CD14-positive monocyte (primary cell): ENCODE measurements at regions of chr10 and their contacts with region 1.

Region 1: DNA sequence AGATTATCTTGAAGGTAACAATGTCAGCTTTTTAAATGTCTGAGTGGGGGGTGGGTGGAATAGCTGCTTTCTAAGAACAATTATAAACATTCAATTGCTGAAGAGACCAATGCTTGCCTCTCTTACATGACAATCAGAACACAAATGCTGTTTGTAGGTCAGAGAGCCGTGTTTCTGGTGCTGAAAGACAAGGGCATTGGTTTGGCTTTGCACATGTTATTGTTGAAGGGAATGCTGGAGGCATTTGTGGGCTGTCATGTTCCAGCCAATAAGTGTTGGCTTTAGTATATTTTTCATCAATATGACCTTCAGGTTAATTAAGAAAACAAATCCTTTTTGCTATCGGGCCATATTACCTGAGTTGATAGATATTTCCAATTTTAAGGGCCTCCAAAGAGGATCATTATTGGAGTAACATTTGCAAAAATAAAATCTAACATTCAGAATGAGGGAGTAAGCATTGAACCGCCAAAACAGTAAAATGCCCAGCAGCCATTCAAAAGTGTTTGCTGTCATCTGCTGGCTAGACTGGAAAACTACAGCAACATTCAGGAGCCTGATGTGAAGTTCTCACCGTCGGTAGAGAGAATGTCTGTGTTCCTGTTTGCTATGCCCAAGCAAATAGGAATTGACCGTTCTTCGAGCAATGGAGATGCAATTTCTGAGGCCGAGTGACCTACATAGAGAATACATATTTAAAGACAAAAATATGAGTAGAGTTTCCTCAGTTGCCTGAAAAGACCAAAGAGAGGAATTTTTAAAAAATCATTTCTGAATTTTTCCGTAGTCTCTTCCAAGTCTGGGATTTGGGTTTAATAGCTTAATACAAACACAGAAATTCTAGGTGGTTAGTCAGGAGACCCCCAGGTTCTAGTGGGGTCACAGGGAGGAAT is 118.9 kb downstream of the APBB1IP start:
- DNase-seq: peak; percentile 23 to 46 (median 42)
- H3K4me3 ChIP-seq: no peak overlapping the region
- H3K4me3 Mint-ChIP-seq: no peak overlapping the region
- H3K27ac ChIP-seq: peak overlapping the region in 1 of 2 donors; percentile 73
- H3K27ac Mint-ChIP-seq: peak overlapping the region; percentile 17 to 97 (median 64)
- H3K4me1 ChIP-seq: peaks cover 25 to 37% of the 10 kb centered on the region in 2 donors
- H3K4me1 Mint-ChIP-seq: peaks cover 43% of the 10 kb centered on the region
- H3K27me3 ChIP-seq: no peaks in the 10 kb centered on the region
- H3K27me3 Mint-ChIP-seq: peaks cover 0 to 2% (median 0%) of the 10 kb centered on the region in 3 donors
- CTCF ChIP-seq: peak; percentile 93

Region 2: DNA sequence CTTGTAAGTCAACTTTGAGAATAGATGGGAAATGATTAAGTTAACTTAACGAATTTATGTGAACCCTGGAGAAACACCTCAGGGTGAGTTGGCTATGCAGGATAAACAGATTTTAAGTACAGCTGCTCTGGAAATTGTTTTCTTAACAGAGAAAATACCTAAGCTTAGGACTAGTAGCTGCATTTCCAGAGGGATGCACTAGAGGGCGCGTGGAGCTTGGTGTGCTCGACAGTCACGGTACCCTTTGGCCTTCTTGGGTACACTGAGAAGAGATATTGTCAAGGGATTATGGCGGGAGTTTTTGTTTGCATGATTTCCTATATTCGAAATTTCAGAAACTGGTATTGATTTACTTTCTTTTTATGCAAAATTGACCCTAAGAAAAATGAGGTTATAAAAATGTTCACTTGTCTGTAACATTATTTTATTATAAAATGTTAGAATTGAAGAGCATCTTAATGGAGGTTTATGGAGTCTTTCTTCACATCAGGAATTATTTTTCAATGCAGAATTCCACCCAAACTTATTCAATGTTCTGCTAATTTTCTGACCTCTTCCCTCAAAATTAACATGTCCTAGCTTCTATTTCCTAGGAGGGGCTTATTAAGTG is 681.3 kb before region 1 on chr10:
- intact Hi-C with region 1: loop called in 1 of 2 experiments (anchors 5 kb)
- DNase-seq: peak; percentile 15 to 62 (median 49)
- H3K4me3 ChIP-seq: no peak overlapping the region
- H3K4me3 Mint-ChIP-seq: no peak overlapping the region
- H3K27ac ChIP-seq: no peak overlapping the region
- H3K27ac Mint-ChIP-seq: no peak overlapping the region
- H3K4me1 ChIP-seq: no peaks in the 10 kb centered on the region
- H3K4me1 Mint-ChIP-seq: no peaks in the 10 kb centered on the region
- H3K27me3 ChIP-seq: no peaks in the 10 kb centered on the region
- H3K27me3 Mint-ChIP-seq: peaks cover 2 to 12% (median 10%) of the 10 kb centered on the region in 3 donors
- CTCF ChIP-seq: peak; percentile 96

Region 3: GRCh38 chr10:26334932-26335573 is 221.9 kb before region 1 on chr10:
- intact Hi-C with region 1: loop called (anchors 1 to 2 kb)
- DNase-seq: peak; percentile 63 to 75 (median 73)
- H3K4me3 ChIP-seq: peak overlapping the region; percentile 51 to 89 (median 70)
- H3K4me3 Mint-ChIP-seq: peak overlapping the region; percentile 84 to 90
- H3K27ac ChIP-seq: peak overlapping the region in 1 of 2 donors; percentile 68
- H3K27ac Mint-ChIP-seq: peak overlapping the region in 6 of 7 donors; percentile 7 to 90 (median 80)
- H3K4me1 ChIP-seq: peaks cover 19 to 22% of the 10 kb centered on the region in 2 donors
- H3K4me1 Mint-ChIP-seq: peaks cover 15% of the 10 kb centered on the region
- H3K27me3 ChIP-seq: no peaks in the 10 kb centered on the region
- H3K27me3 Mint-ChIP-seq: peaks cover 0 to 2% (median 1%) of the 10 kb centered on the region in 3 donors
- CTCF ChIP-seq: peak; percentile 95

Region 4: DNA sequence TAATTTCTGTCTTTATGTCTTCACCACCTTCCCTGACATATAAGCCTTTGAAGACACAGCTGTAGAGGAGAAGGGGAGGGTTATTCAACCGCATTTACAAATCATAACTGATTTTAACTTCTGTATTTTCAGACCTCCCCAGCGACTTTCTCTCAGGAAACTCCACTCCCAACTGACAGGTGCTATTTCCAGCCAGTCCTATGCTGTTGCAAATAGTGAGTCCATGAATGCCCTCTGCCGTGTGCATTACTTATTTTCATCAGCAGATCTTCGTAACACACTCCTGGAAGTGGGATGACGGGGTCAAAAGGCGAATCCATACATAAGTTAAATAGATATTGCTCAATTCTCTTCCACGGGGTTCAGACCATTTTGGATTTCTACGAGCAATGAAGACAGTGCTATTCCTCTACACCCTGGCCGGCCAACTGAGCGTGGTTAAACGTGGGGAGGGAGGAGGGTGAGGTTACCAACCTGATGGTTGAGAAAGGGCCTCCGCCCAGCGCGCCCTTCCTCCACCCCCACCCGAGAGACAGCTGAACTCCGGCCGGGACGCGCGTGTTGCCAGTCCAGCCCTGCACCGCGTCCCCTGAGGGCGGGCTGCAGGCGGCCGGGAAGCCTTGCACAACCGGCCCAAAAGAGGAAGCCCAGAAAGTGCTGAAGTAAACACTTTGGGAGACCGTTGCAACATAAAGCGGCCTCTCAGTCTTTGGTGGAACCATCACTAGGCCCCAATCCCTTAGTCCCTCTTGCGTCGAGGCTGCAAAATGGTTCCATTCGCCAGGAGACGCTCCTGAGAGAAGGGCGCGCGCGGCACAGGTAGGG is 119.1 kb before region 1 on chr10 and contains the start of gene APBB1IP:
- intact Hi-C with region 1: loop called in 1 of 2 experiments (anchors 10 kb)
- DNase-seq: peak; percentile 96 to 98 (median 97)
- H3K4me3 ChIP-seq: peak within 1 kb of the TSS; percentile 61 to 94 (median 77)
- H3K4me3 Mint-ChIP-seq: peak within 1 kb of the TSS; percentile 91 to 97
- H3K27ac ChIP-seq: peak within 1 kb of the TSS; percentile 96 to 97
- H3K27ac Mint-ChIP-seq: peak within 1 kb of the TSS; percentile 96 to 99 (median 99)
- H3K4me1 ChIP-seq: peaks cover 58 to 84% of the 10 kb centered on the region in 2 donors
- H3K4me1 Mint-ChIP-seq: peaks cover 54% of the 10 kb centered on the region
- H3K27me3 ChIP-seq: no peaks in the 10 kb centered on the region
- H3K27me3 Mint-ChIP-seq: no peaks in the 10 kb centered on the region
- CTCF ChIP-seq: peak; percentile 22
- polyA plus RNA-seq, gene APBB1IP: 24.6 to 78.7 (median 45.4) TPM

Region 5: DNA sequence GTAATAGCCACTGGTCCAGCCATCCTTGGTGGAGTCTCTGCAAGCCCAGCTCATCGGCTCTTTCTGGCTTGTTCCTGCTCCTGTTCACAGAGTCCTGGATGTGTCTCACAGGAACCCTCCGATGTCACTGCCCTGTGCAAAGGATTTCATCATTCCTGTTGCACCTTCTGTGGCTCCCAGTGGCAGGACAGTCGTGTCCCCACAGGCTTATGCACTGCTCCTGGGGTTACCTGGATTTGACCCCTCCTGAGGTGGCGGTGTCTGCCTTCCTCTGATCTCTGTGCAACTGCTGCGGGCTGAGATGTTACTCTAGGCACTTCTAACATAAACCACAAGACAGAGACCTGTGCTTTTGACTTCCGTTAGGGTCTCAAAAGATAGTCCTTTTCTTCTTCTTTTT is 88.3 kb before region 1 on chr10:
- intact Hi-C with region 1: no loop called
- DNase-seq: no peak
- H3K4me3 ChIP-seq: no peak overlapping the region
- H3K4me3 Mint-ChIP-seq: no peak overlapping the region
- H3K27ac ChIP-seq: peak overlapping the region in 1 of 2 donors; percentile 52
- H3K27ac Mint-ChIP-seq: peak overlapping the region in 4 of 7 donors; percentile 24 to 67 (median 33)
- H3K4me1 ChIP-seq: peaks cover 17 to 26% of the 10 kb centered on the region in 2 donors
- H3K4me1 Mint-ChIP-seq: peaks cover 58% of the 10 kb centered on the region
- H3K27me3 ChIP-seq: no peaks in the 10 kb centered on the region
- H3K27me3 Mint-ChIP-seq: no peaks in the 10 kb centered on the region
- CTCF ChIP-seq: no peak

Region 6: GRCh38 chr10:26503911-26504310 is 53.1 kb before region 1 on chr10:
- intact Hi-C with region 1: loop called in 1 of 2 experiments (anchors 10 kb)
- DNase-seq: no peak
- H3K4me3 ChIP-seq: no peak overlapping the region
- H3K4me3 Mint-ChIP-seq: no peak overlapping the region
- H3K27ac ChIP-seq: peak overlapping the region in 1 of 2 donors; percentile 66
- H3K27ac Mint-ChIP-seq: peak overlapping the region in 5 of 7 donors; percentile 11 to 91 (median 51)
- H3K4me1 ChIP-seq: peaks cover 7 to 20% of the 10 kb centered on the region in 2 donors
- H3K4me1 Mint-ChIP-seq: peaks cover 32% of the 10 kb centered on the region
- H3K27me3 ChIP-seq: no peaks in the 10 kb centered on the region
- H3K27me3 Mint-ChIP-seq: no peaks in the 10 kb centered on the region
- CTCF ChIP-seq: peak; percentile 27

Region 7: DNA sequence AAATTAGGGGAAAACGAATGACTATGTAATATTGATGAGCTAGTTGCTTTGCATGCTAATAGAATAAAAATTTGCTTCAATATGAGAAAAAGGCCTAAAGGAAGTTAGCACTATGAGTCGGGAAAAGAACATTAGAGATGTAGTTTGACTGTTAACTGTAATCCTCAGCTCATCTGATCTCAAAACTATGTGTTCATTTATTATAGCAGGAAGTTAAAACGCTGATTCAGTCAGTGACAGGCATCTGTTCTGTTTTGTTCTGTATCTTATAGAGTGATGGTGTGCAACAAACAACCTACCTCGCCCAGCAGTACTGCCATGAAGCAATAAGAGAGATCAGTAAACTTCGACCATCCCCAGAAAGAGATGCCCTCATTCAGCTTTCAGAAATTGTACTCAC is 189.1 kb after region 1 on chr10:
- intact Hi-C with region 1: no loop called
- DNase-seq: no peak
- H3K4me3 ChIP-seq: no peak overlapping the region
- H3K4me3 Mint-ChIP-seq: no peak overlapping the region
- H3K27ac ChIP-seq: peak overlapping the region in 1 of 2 donors; percentile 54
- H3K27ac Mint-ChIP-seq: peak overlapping the region in 4 of 7 donors; percentile 14 to 50 (median 33)
- H3K4me1 ChIP-seq: no peaks in the 10 kb centered on the region
- H3K4me1 Mint-ChIP-seq: peaks cover 3% of the 10 kb centered on the region
- H3K27me3 ChIP-seq: no peaks in the 10 kb centered on the region
- H3K27me3 Mint-ChIP-seq: no peaks in the 10 kb centered on the region
- CTCF ChIP-seq: no peak

Region 8: DNA sequence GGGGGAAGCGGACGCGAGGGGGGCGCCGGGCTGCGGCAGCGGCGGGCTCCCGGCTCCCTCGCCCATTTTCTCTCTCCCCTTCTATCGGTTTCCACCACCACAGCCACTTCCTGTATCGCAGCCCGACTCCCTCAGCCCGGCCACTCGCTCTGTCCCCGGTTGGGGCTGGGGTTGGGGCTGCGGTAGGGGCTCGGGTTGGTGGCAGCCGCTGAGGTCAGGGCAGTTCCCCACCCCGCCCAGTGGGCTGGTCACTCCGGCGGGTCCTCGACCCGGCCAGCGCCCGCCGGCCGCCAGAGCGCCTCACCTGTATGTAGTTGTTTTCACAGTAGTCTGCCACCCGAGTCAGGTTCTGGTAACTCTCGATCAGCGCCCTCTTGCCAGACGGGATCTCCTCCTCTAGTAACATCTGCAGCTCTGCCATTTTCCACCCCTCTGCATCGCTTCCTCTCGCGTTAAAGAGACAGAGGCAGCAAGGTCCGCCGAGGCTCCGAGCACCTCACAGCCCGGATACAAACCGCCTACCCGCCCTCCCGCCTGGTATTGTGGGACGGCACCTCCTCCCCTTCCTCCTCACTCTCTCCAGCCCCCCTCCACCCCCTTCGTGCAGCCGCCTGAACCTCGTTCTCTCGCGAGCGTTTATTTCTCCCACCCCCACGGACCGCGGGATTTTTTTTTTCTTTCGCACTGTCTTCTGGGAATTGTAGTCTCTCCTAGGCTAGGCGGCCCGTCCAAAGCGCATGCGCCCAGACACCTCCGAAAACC is 303.6 kb after region 1 on chr10 and contains the start of gene ABI1:
- intact Hi-C with region 1: no loop called
- DNase-seq: peak; percentile 97 to 99 (median 99)
- H3K4me3 ChIP-seq: peak within 1 kb of the TSS; percentile 86 to 99 (median 89)
- H3K4me3 Mint-ChIP-seq: peak within 1 kb of the TSS; percentile 97 to 98
- H3K27ac ChIP-seq: peak within 1 kb of the TSS; percentile 95 to 96
- H3K27ac Mint-ChIP-seq: peak within 1 kb of the TSS; percentile 94 to 99 (median 98)
- H3K4me1 ChIP-seq: peaks cover 43 to 60% of the 10 kb centered on the region in 2 donors
- H3K4me1 Mint-ChIP-seq: peaks cover 47% of the 10 kb centered on the region
- H3K27me3 ChIP-seq: no peaks in the 10 kb centered on the region
- H3K27me3 Mint-ChIP-seq: peaks cover 2 to 5% (median 2%) of the 10 kb centered on the region in 3 donors
- CTCF ChIP-seq: no peak
- polyA plus RNA-seq, gene ABI1: 39.8 to 77.2 (median 61.5) TPM